Prostate gland (tissue), 2 donors: ENCODE measurements at regions of chr10 and their contacts with region 1.

Region 1: GRCh38 chr10:72331601-72332422 is 22.9 kb downstream of the DNAJB12 start:
- DNase-seq: peak; percentile 95
- H3K4me3 ChIP-seq: no peak overlapping the region
- H3K27ac ChIP-seq: peak overlapping the region; percentile 86 to 87
- H3K4me1 ChIP-seq: peaks cover 43% of the 10 kb centered on the region
- H3K27me3 ChIP-seq: no peaks in the 10 kb centered on the region
- CTCF ChIP-seq: peak in 3 of 4 experiments; percentile 16 to 64 (median 40)
- POLR2A ChIP-seq: peak; percentile 51

Region 2: GRCh38 chr10:71835671-71836595 is 495.9 kb before region 1 on chr10:
- intact Hi-C with region 1: no loop called
- DNase-seq: no peak
- H3K4me3 ChIP-seq: no peak overlapping the region
- H3K27ac ChIP-seq: peak overlapping the region in 1 of 2 donors; percentile 2
- H3K4me1 ChIP-seq: peaks cover 10% of the 10 kb centered on the region
- H3K27me3 ChIP-seq: no peaks in the 10 kb centered on the region
- CTCF ChIP-seq: no peak
- POLR2A ChIP-seq: no peak

Region 3: DNA sequence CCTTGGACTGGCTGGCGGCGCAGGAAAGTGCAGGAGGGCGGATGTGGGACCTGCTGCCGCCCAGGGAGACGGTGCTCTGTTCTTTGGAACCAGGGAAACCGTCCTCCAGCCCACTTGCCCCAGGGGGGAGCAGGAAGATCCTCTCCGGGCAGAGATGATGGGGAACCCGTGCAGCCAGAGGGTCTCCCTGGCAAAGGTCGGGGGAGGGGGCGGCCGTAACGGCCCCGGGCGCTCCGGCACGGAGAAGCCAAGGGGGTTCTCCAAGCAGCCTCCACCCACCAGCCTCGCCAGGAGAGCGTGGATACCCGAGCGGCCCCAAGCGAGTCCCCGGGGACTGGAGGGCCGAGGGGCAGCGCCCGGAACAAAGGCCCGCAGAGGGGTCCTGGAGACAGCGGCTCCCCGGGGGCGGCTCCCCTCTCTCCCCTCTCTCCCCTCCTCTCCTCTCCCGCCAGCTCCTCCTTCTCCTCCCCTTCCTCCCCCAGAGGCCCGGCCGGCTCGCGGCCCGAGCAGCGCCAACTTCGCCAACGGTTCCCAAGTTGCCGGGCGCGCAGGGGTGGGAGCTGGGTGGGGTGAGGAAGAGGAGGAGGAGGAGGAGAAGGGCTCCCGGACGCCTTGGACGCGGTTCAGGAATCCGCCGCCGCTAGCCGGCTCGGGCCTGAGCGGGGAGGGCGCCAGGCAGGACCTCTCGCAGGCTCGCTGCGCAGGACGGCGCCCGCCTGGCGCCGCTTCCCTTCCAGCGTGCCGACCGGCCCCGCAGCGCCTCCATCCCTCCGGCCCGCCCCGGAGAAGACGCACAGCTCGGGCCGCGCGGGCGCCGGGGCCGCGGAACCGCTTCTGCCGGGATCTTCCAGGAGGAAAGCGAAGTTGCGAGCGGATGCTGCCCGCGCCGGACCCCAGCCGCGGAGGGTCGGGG is 367.8 kb before region 1 on chr10 and contains the start of gene CHST3:
- intact Hi-C with region 1: loop called (anchors 5 kb)
- DNase-seq: peak; percentile 41
- H3K4me3 ChIP-seq: peak within 1 kb of the TSS; percentile 61 to 65
- H3K27ac ChIP-seq: peak within 1 kb of the TSS; percentile 89 to 90
- H3K4me1 ChIP-seq: peaks cover 2% of the 10 kb centered on the region
- H3K27me3 ChIP-seq: no peaks in the 10 kb centered on the region
- CTCF ChIP-seq: no peak
- POLR2A ChIP-seq: peak; percentile 23
- total RNA-seq, gene CHST3: 16.5 to 197 TPM

Region 4: DNA sequence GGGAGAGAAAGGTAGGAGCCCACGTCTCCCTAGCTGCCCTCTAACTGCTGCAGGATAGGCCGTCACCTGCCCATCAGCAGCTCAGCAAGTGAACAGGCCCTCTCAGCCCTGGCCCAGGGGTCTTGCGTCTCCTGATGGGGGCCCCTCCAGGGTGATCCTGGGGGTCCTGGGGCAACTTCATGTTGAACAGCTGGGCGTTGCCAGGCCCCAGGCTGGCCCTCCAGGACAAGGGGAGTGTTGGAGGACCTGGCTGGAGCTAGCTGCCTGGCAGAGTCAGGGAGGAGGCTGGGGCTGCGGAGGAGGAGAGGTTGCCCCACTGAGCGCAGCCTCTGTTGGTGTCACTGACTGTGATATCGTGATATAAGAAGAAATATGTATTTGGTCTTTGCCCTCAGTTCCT is 278.1 kb before region 1 on chr10:
- intact Hi-C with region 1: loop called (anchors 2 kb)
- DNase-seq: no peak
- H3K4me3 ChIP-seq: no peak overlapping the region
- H3K27ac ChIP-seq: no peak overlapping the region
- H3K4me1 ChIP-seq: no peaks in the 10 kb centered on the region
- H3K27me3 ChIP-seq: no peaks in the 10 kb centered on the region
- CTCF ChIP-seq: no peak
- POLR2A ChIP-seq: no peak

Region 5: GRCh38 chr10:72126184-72126871 is 205.5 kb before region 1 on chr10:
- intact Hi-C with region 1: loop called (anchors 5 kb)
- DNase-seq: no peak
- H3K4me3 ChIP-seq: no peak overlapping the region
- H3K27ac ChIP-seq: no peak overlapping the region
- H3K4me1 ChIP-seq: no peaks in the 10 kb centered on the region
- H3K27me3 ChIP-seq: no peaks in the 10 kb centered on the region
- CTCF ChIP-seq: peak in 3 of 4 experiments; percentile 23 to 64 (median 47)
- POLR2A ChIP-seq: no peak